ENCODE measurements at regions of chr9 and their contacts with region 1.

Region 1: GRCh38 chr9:73104342-73104741 is 47.3 kb upstream of the ANXA1 start:
- DNase-seq: no peak
- H3K4me3 ChIP-seq: no peak overlapping the region
- H3K4me3 Mint-ChIP-seq: no peak overlapping the region
- H3K27ac ChIP-seq: no peak overlapping the region
- H3K27ac Mint-ChIP-seq: no peak overlapping the region
- H3K4me1 ChIP-seq: no peaks in the 10 kb centered on the region
- H3K4me1 Mint-ChIP-seq: peaks cover 0 to 3% (median 1%) of the 10 kb centered on the region in 4 donors
- H3K27me3 ChIP-seq: no peaks in the 10 kb centered on the region
- H3K27me3 Mint-ChIP-seq: peaks cover 2 to 8% of the 10 kb centered on the region in 2 donors

Region 2: GRCh38 chr9:72635197-72635596 is 469.1 kb before region 1 on chr9:
- CTCF ChIA-PET with region 1: no interaction called
- POLR2A ChIA-PET with region 1: no interaction called
- intact Hi-C with region 1: no loop called
- DNase-seq: peak in 2 of 5 donors; percentile 18 to 22
- H3K4me3 ChIP-seq: no peak overlapping the region
- H3K4me3 Mint-ChIP-seq: no peak overlapping the region
- H3K27ac ChIP-seq: no peak overlapping the region
- H3K27ac Mint-ChIP-seq: no peak overlapping the region
- H3K4me1 ChIP-seq: no peaks in the 10 kb centered on the region
- H3K4me1 Mint-ChIP-seq: peaks cover 1 to 5% (median 5%) of the 10 kb centered on the region in 4 donors
- H3K27me3 ChIP-seq: no peaks in the 10 kb centered on the region
- H3K27me3 Mint-ChIP-seq: peaks cover 5% of the 10 kb centered on the region in 2 donors

Region 3: GRCh38 chr9:73093740-73094379 is 10.5 kb before region 1 on chr9:
- CTCF ChIA-PET with region 1: interaction called, 21 read pairs
- POLR2A ChIA-PET with region 1: no interaction called
- intact Hi-C with region 1: no loop called
- DNase-seq: no peak
- H3K4me3 ChIP-seq: peak overlapping the region in 1 of 2 donors; percentile 39
- H3K4me3 Mint-ChIP-seq: peak overlapping the region in 7 of 8 donors; percentile 39 to 84 (median 68)
- H3K27ac ChIP-seq: no peak overlapping the region
- H3K27ac Mint-ChIP-seq: no peak overlapping the region
- H3K4me1 ChIP-seq: peaks cover 10% of the 10 kb centered on the region
- H3K4me1 Mint-ChIP-seq: peaks cover 2 to 5% (median 4%) of the 10 kb centered on the region in 4 donors
- H3K27me3 ChIP-seq: no peaks in the 10 kb centered on the region
- H3K27me3 Mint-ChIP-seq: peaks cover 0 to 3% of the 10 kb centered on the region in 2 donors

Region 4: GRCh38 chr9:73132034-73132776 is 27.9 kb after region 1 on chr9:
- CTCF ChIA-PET with region 1: interaction called, 12 read pairs
- POLR2A ChIA-PET with region 1: interaction called, 9 read pairs
- intact Hi-C with region 1: no loop called
- DNase-seq: peak; percentile 84 to 90 (median 89)
- H3K4me3 ChIP-seq: peak overlapping the region; percentile 62 to 75
- H3K4me3 Mint-ChIP-seq: peak overlapping the region; percentile 70 to 95 (median 92)
- H3K27ac ChIP-seq: peak overlapping the region; percentile 91
- H3K27ac Mint-ChIP-seq: peak overlapping the region; percentile 84 to 99 (median 97)
- H3K4me1 ChIP-seq: peaks cover 47% of the 10 kb centered on the region
- H3K4me1 Mint-ChIP-seq: peaks cover 24 to 50% (median 35%) of the 10 kb centered on the region in 4 donors
- H3K27me3 ChIP-seq: no peaks in the 10 kb centered on the region
- H3K27me3 Mint-ChIP-seq: no peaks in the 10 kb centered on the region

Region 5: DNA sequence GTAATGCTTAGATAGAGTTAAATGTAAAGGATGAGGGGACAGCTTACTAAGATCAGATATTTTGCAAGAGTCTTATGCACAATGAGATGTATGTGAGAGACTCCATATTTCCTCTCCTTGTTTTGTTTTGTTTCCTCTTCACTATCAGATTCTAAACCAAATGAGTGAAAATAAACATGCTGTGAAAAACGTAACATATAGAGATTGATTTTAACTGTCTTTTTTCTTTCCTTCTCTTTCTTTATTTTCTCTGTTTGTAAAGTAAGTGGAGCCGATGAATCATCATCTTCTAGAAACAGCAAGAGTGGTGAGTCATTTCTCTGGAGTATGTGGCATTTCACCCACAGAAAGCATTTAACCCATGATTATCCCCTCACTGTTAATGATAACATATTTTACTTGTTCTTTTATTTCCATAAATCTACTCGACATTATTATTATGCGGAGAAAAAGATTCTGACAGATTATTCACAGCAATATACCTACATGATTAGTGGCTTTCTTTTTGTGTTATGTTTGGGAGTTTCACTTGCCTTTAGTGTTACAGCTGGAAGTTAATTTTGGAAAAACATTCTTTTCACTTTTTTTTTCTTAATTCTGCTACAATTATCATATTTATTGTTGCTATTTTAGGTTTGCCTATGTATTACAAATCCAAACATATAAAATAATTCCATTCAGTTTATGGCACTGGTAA is 45.2 kb after region 1 on chr9:
- CTCF ChIA-PET with region 1: interaction called, 23 read pairs
- POLR2A ChIA-PET with region 1: interaction called, 11 read pairs
- intact Hi-C with region 1: loop called (anchors 1 kb)
- DNase-seq: peak in 4 of 5 donors; percentile 33 to 68 (median 50)
- H3K4me3 ChIP-seq: peak overlapping the region in 1 of 2 donors; percentile 17
- H3K4me3 Mint-ChIP-seq: peak overlapping the region; percentile 37 to 83 (median 78)
- H3K27ac ChIP-seq: peak overlapping the region; percentile 75
- H3K27ac Mint-ChIP-seq: peak overlapping the region; percentile 82 to 99 (median 95)
- H3K4me1 ChIP-seq: peaks cover 41% of the 10 kb centered on the region
- H3K4me1 Mint-ChIP-seq: peaks cover 24 to 51% (median 32%) of the 10 kb centered on the region in 4 donors
- H3K27me3 ChIP-seq: no peaks in the 10 kb centered on the region
- H3K27me3 Mint-ChIP-seq: no peaks in the 10 kb centered on the region

Region 6: DNA sequence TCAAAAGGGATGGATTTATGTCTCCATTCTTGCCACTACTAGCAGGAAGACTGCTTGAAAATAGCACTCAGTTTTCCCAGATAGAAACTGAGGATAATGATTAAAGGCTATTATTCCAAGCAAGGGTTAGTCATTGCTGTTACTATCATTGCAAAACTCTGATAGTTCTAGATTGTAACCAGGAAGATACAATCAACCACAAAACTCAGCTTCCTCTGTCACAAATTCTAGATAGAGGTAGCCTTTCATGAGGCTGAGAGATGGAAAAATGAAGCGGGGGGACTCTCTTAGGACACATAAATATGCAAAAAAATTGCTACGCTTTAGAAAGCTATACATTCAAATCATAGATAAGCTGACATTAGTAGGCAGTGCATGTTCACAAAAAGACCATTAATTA is 50.4 kb after region 1 on chr9:
- CTCF ChIA-PET with region 1: interaction called, 23 read pairs
- POLR2A ChIA-PET with region 1: interaction called, 11 read pairs
- intact Hi-C with region 1: loop called (anchors 1 kb)
- DNase-seq: peak; percentile 66 to 77 (median 68)
- H3K4me3 ChIP-seq: peak overlapping the region; percentile 3 to 78
- H3K4me3 Mint-ChIP-seq: peak overlapping the region; percentile 92 to 99 (median 94)
- H3K27ac ChIP-seq: peak overlapping the region; percentile 75
- H3K27ac Mint-ChIP-seq: peak overlapping the region; percentile 95 to 99 (median 97)
- H3K4me1 ChIP-seq: peaks cover 65% of the 10 kb centered on the region
- H3K4me1 Mint-ChIP-seq: peaks cover 37 to 68% (median 52%) of the 10 kb centered on the region in 4 donors
- H3K27me3 ChIP-seq: no peaks in the 10 kb centered on the region
- H3K27me3 Mint-ChIP-seq: no peaks in the 10 kb centered on the region

Region 7: GRCh38 chr9:73162987-73163768 is 58.8 kb after region 1 on chr9:
- CTCF ChIA-PET with region 1: interaction called, 11 read pairs
- POLR2A ChIA-PET with region 1: interaction called, 3 read pairs
- intact Hi-C with region 1: no loop called
- DNase-seq: peak in 1 of 5 donors; percentile 27
- H3K4me3 ChIP-seq: no peak overlapping the region
- H3K4me3 Mint-ChIP-seq: peak overlapping the region in 2 of 8 donors; percentile 39 to 67
- H3K27ac ChIP-seq: peak overlapping the region; percentile 32
- H3K27ac Mint-ChIP-seq: peak overlapping the region; percentile 80 to 94 (median 86)
- H3K4me1 ChIP-seq: peaks cover 54% of the 10 kb centered on the region
- H3K4me1 Mint-ChIP-seq: peaks cover 31 to 66% (median 49%) of the 10 kb centered on the region in 4 donors
- H3K27me3 ChIP-seq: no peaks in the 10 kb centered on the region
- H3K27me3 Mint-ChIP-seq: no peaks in the 10 kb centered on the region

Region 8: DNA sequence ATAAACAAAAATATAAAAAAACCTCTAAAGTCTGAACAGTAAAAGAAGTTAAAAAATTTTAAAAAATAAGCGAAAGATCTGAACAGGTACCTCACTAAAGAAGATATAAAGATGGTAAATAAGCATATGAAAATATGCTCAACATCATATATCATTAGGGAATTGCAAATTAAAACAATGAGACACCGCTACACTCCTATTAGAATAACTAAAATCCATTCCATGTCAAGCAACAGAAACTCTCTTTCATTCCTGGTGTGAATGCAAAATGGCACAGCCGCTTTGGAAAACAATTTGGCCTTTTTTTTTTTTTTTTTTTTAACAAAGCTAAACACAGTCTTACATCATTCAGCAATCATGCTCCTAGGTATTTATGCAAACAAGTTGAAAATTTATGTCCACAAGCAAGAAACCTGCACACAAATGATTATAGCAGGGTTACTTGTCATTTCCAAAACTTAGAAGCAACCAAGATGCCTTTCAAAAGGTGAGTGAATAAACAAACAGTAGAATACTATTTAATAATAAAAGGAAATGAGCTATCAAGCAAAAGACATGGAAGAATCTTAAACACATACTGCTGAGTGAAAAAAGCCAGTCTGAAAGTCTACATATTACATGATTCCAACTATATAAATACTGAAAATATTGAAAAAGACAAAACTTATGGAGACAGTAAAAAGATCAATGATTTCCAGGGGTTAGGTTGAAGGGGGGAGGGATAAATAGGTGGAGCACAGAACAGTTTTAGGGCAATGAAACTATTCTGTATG is 69.4 kb after region 1 on chr9:
- CTCF ChIA-PET with region 1: interaction called, 252 read pairs
- POLR2A ChIA-PET with region 1: interaction called, 5 read pairs
- intact Hi-C with region 1: no loop called
- DNase-seq: no peak
- H3K4me3 ChIP-seq: no peak overlapping the region
- H3K4me3 Mint-ChIP-seq: no peak overlapping the region
- H3K27ac ChIP-seq: no peak overlapping the region
- H3K27ac Mint-ChIP-seq: peak overlapping the region in 1 of 7 donors; percentile 14
- H3K4me1 ChIP-seq: no peaks in the 10 kb centered on the region
- H3K4me1 Mint-ChIP-seq: peaks cover 0 to 11% (median 2%) of the 10 kb centered on the region in 4 donors
- H3K27me3 ChIP-seq: no peaks in the 10 kb centered on the region
- H3K27me3 Mint-ChIP-seq: no peaks in the 10 kb centered on the region